PC-9 (cell line): ENCODE measurements at regions of chr15 and their contacts with region 1.

Region 1: GRCh38 chr15:65916664-65917406 is 47.5 kb downstream of the RAB11A start:
- DNase-seq: peak in 1 of 2 experiments; percentile 71
- H3K4me3 ChIP-seq: no peak overlapping the region
- H3K27ac ChIP-seq: no peak overlapping the region
- H3K4me1 ChIP-seq: no peaks in the 10 kb centered on the region
- H3K27me3 ChIP-seq: no peaks in the 10 kb centered on the region
- CTCF ChIP-seq: peak; percentile 55

Region 2: DNA sequence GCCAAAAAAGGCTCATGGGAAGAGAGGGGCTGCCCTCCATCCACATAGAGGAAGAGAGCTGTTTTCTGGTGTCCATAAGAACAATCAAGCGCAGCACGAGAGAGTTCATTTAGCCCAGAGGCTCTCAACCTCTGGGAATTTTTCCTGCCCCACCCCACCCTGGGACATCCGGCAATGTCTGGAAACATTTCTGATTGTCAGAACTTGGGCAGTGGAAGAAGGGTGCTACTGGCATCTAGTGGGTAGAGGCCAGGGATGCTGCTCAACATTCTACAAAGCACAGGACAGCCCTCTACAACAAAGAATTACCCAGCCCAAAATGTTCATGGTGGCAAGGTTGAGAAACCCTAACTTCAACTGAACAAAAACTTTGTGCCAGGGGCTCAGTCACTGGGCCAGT is 45.4 kb after region 1 on chr15:
- CTCF ChIA-PET with region 1: no interaction called
- POLR2A ChIA-PET with region 1: no interaction called
- intact Hi-C with region 1: loop called (anchors 2 kb)
- DNase-seq: peak in 1 of 2 experiments; percentile 35
- H3K4me3 ChIP-seq: no peak overlapping the region
- H3K27ac ChIP-seq: no peak overlapping the region
- H3K4me1 ChIP-seq: no peaks in the 10 kb centered on the region
- H3K27me3 ChIP-seq: no peaks in the 10 kb centered on the region
- CTCF ChIP-seq: peak; percentile 34; the same call in 1 of the 2 replicates

Region 3: GRCh38 chr15:66196602-66197001 is 279.8 kb after region 1 on chr15:
- CTCF ChIA-PET with region 1: no interaction called
- POLR2A ChIA-PET with region 1: no interaction called
- intact Hi-C with region 1: loop called (anchors 10 kb)
- DNase-seq: peak in 1 of 2 experiments; percentile 45
- H3K4me3 ChIP-seq: no peak overlapping the region
- H3K27ac ChIP-seq: no peak overlapping the region
- H3K4me1 ChIP-seq: no peaks in the 10 kb centered on the region
- H3K27me3 ChIP-seq: no peaks in the 10 kb centered on the region
- CTCF ChIP-seq: no peak

Region 4: DNA sequence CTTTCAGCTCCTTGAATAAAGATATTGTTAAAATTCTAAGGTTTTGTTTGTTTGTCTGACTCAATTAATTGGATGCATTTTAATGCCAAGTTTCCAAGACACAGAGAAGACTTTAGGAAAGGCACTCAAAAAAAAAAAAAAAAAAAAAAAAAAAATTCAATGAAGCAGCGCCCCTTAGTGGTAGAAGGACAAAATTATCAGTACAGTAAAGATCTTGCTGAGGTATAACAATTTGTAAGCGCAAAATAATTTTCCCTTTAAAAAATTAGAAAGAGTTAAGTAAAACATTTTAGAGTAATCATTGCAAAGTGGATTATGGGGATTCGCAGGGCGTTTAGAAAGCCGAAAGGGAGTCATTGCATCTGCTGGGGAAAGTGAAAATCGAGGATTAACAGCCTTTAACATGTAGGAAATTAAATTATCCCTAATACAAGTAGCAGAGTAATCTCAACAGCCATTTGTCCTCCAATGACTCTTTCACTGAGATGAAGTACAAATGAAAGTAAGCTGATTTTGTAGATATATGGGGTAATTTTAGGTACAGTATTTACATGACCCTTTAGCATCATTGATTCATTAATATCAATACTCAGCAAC is 370.7 kb after region 1 on chr15:
- CTCF ChIA-PET with region 1: no interaction called
- POLR2A ChIA-PET with region 1: no interaction called
- intact Hi-C with region 1: loop called (anchors 1 kb)
- DNase-seq: peak in 1 of 2 experiments; percentile 42
- H3K4me3 ChIP-seq: no peak overlapping the region
- H3K27ac ChIP-seq: no peak overlapping the region
- H3K4me1 ChIP-seq: peaks cover 11% of the 10 kb centered on the region
- H3K27me3 ChIP-seq: no peaks in the 10 kb centered on the region
- CTCF ChIP-seq: peak; percentile 75